ENCODE measurements at regions of chr9 and their contacts with region 1.

Region 1: GRCh38 chr9:113591001-113591898 is 127.7 kb downstream of the RGS3 start:
- DNase-seq: peak; percentile 37
- H3K4me3 Mint-ChIP-seq: no peak overlapping the region
- H3K27ac Mint-ChIP-seq: peak overlapping the region; percentile 34
- H3K4me1 Mint-ChIP-seq: peaks cover 53% of the 10 kb centered on the region
- H3K27me3 Mint-ChIP-seq: no peaks in the 10 kb centered on the region

Region 2: GRCh38 chr9:113011911-113012381 is 579.3 kb before region 1 on chr9 and contains the start of gene ZNF883:
- intact Hi-C with region 1: no loop called
- DNase-seq: no peak
- H3K4me3 Mint-ChIP-seq: peak within 1 kb of the TSS; percentile 11
- H3K27ac Mint-ChIP-seq: no peak within 1 kb of the TSS
- H3K4me1 Mint-ChIP-seq: no peaks in the 10 kb centered on the region
- H3K27me3 Mint-ChIP-seq: no peaks in the 10 kb centered on the region
- total RNA-seq, gene ZNF883: not detected in 2 replicates

Region 3: GRCh38 chr9:113401027-113401792 is 190.0 kb before region 1 on chr9 and contains the start of gene ALAD:
- intact Hi-C with region 1: loop called (anchors 2 kb)
- DNase-seq: peak; percentile 99
- H3K4me3 Mint-ChIP-seq: peak within 1 kb of the TSS; percentile 89
- H3K27ac Mint-ChIP-seq: peak within 1 kb of the TSS; percentile 67
- H3K4me1 Mint-ChIP-seq: peaks cover 25% of the 10 kb centered on the region
- H3K27me3 Mint-ChIP-seq: no peaks in the 10 kb centered on the region
- total RNA-seq, gene ALAD: 23.0 and 23.7 TPM in 2 replicates

Region 4: DNA sequence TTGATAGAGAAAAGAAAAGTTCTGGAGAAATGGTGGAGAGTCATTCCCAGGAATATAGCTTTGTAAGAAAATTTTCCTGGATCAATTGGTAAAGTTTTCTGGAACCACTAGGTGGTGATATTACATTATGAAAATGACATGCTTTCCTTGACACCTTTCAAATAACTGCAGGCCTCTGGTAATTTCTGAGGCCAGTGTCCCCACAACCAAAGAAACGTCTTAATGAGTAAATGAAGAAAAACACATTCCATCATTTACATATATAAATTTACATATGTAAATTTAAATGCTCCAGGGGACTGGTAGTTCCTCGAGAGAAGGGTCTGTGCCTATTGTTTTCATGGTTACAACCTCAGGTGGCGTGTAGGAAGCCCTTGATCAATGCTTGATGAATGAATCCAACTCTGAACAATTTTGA is 144.9 kb before region 1 on chr9:
- intact Hi-C with region 1: loop called (anchors 2 kb)
- DNase-seq: no peak
- H3K4me3 Mint-ChIP-seq: no peak overlapping the region
- H3K27ac Mint-ChIP-seq: peak overlapping the region; percentile 37
- H3K4me1 Mint-ChIP-seq: no peaks in the 10 kb centered on the region
- H3K27me3 Mint-ChIP-seq: no peaks in the 10 kb centered on the region

Region 5: DNA sequence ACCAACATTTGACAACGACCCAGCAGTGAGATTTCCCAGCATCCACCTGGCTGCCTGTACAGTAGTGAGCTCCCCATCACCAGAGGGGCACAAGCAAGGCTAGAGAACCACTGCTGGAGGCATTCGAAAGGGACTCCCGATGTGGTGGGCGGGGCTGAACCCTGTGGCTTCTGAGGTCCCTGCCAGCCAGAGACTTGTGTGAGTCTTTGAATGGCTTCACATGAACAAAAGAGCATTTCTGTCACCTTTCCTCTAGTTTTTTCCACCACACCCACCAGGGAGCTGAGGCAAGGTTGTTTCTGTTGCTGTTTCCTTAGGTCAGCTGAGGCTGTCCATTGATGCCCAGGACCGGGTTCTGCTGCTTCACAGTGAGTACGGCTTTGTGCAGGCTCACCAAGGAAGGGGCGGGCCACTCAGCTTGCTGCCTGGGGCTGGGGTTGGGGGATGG is 112.1 kb before region 1 on chr9:
- intact Hi-C with region 1: no loop called
- DNase-seq: peak; percentile 9
- H3K4me3 Mint-ChIP-seq: no peak overlapping the region
- H3K27ac Mint-ChIP-seq: no peak overlapping the region
- H3K4me1 Mint-ChIP-seq: peaks cover 13% of the 10 kb centered on the region
- H3K27me3 Mint-ChIP-seq: peaks cover 16% of the 10 kb centered on the region

Region 6: DNA sequence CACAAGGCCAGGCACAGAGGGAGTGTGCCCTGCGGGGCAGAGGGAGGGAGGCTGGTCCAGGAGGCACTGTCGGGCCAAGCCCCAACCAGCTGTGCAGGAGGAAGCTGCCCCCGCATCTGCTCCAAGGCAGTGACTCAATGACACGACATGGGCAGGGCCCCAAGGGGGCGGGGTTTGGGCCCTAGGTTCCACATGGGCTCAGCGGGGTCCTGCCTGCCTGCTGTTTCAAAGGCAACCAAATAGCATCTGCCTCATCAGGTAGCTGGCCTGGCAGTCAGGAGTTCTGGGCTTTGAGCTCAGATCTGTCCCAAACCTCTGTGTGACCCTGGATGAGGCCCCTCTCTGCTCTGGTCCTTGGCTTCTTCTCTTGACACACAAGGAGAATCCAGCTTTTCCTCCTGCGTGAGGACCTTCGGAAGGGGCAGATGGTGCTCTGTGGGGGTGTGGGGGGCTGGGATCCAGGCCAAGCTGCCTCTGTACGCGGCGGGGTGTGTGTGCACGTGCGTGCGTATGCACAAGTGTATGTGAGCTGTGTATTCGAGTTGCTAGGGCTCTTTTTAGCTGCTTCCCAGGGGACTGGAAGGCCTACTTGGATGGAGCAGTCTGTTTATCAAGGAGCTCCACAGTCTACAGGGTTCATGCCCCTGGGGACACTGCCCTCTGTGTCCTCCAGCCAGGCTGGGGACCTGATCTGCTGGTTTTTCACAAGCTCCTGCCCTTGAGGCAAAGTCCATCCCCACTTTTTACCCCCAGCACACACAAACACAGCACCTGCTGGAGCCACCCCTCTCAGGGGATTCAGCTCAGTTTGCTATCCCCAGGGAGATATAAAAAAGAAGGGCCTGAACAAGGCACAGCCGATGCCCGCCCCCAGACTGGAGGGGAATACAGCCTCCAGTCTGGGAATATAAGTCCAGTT is 11.1 kb after region 1 on chr9:
- intact Hi-C with region 1: loop called (anchors 1 kb)
- DNase-seq: no peak
- H3K4me3 Mint-ChIP-seq: no peak overlapping the region
- H3K27ac Mint-ChIP-seq: no peak overlapping the region
- H3K4me1 Mint-ChIP-seq: peaks cover 5% of the 10 kb centered on the region
- H3K27me3 Mint-ChIP-seq: no peaks in the 10 kb centered on the region